MCF 10A (cell line): ENCODE measurements at regions of chr16 and their contacts with region 1.

Region 1: DNA sequence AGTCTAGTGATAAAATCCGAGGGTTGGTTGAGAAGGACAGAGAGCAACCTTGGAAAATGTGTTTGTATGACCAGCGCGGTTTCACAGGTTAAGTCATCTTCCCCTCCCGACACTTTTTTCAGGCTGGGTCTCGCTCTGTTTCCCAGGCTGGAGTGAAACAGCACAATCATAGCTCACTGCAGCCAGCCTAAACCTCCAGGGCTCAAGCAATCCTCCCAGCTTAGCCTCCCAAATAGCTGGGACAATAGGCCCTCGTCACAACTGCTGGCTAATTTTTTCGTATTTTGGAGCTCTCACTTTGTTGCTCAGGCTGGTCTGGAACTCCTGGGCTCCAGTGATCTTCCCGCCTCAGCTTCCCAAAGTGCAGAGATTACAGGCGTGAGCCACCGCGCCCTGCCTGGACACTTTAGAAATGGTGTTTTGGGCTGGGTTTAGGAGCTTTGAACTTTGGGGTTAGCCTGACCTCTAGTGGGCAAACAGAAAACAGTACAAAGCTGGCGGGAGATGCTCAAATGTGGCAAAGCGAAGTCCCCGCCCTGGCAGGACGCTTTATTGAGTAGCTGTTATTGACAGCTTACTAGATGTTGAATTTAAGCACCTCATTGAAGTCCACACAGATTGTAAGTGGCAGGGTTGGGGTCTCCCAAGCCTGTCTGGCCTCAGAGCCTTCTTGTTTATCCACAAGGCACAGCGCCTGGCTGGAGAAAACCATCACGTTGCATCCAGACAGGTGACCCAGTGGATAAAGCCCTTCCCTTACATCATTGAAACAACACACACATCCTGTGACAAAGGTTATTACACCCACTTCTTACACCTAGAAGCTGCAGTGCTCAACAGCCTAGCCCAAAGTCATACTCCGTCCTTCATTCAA is 34.7 kb upstream of the RBBP6 start:
- DNase-seq: peak; percentile 78
- H3K4me3 Mint-ChIP-seq: no peak overlapping the region
- H3K27ac Mint-ChIP-seq: no peak overlapping the region
- H3K4me1 Mint-ChIP-seq: no peaks in the 10 kb centered on the region
- H3K27me3 Mint-ChIP-seq: no peaks in the 10 kb centered on the region
- CTCF ChIP-seq: peak; percentile 88

Region 2: GRCh38 chr16:23803591-23804123 is 701.1 kb before region 1 on chr16:
- CTCF ChIA-PET with region 1: interaction called, 8 read pairs
- POLR2A ChIA-PET with region 1: no interaction called
- intact Hi-C with region 1: loop called (anchors 2 kb)
- DNase-seq: peak; percentile 61
- H3K4me3 Mint-ChIP-seq: no peak overlapping the region
- H3K27ac Mint-ChIP-seq: peak overlapping the region; percentile 5
- H3K4me1 Mint-ChIP-seq: peaks cover 7% of the 10 kb centered on the region
- H3K27me3 Mint-ChIP-seq: no peaks in the 10 kb centered on the region
- CTCF ChIP-seq: peak; percentile 46

Region 3: GRCh38 chr16:24036614-24037013 is 468.1 kb before region 1 on chr16:
- CTCF ChIA-PET with region 1: interaction called, 508 read pairs
- POLR2A ChIA-PET with region 1: interaction called, 3 read pairs
- intact Hi-C with region 1: loop called (anchors 1 kb)
- DNase-seq: peak; percentile 55
- H3K4me3 Mint-ChIP-seq: no peak overlapping the region
- H3K27ac Mint-ChIP-seq: no peak overlapping the region
- H3K4me1 Mint-ChIP-seq: no peaks in the 10 kb centered on the region
- H3K27me3 Mint-ChIP-seq: peaks cover 38% of the 10 kb centered on the region
- CTCF ChIP-seq: peak; percentile 81

Region 4: GRCh38 chr16:24054741-24055491 is 449.8 kb before region 1 on chr16:
- CTCF ChIA-PET with region 1: interaction called, 11 read pairs
- POLR2A ChIA-PET with region 1: no interaction called
- intact Hi-C with region 1: no loop called
- DNase-seq: no peak
- H3K4me3 Mint-ChIP-seq: no peak overlapping the region
- H3K27ac Mint-ChIP-seq: no peak overlapping the region
- H3K4me1 Mint-ChIP-seq: no peaks in the 10 kb centered on the region
- H3K27me3 Mint-ChIP-seq: peaks cover 74% of the 10 kb centered on the region
- CTCF ChIP-seq: no peak

Region 5: GRCh38 chr16:24253192-24253591 is 251.5 kb before region 1 on chr16:
- CTCF ChIA-PET with region 1: interaction called, 25 read pairs
- POLR2A ChIA-PET with region 1: no interaction called
- intact Hi-C with region 1: loop called (anchors 1 kb)
- DNase-seq: peak; percentile 60
- H3K4me3 Mint-ChIP-seq: no peak overlapping the region
- H3K27ac Mint-ChIP-seq: no peak overlapping the region
- H3K4me1 Mint-ChIP-seq: peaks cover 6% of the 10 kb centered on the region
- H3K27me3 Mint-ChIP-seq: peaks cover 52% of the 10 kb centered on the region
- CTCF ChIP-seq: peak; percentile 61

Region 6: DNA sequence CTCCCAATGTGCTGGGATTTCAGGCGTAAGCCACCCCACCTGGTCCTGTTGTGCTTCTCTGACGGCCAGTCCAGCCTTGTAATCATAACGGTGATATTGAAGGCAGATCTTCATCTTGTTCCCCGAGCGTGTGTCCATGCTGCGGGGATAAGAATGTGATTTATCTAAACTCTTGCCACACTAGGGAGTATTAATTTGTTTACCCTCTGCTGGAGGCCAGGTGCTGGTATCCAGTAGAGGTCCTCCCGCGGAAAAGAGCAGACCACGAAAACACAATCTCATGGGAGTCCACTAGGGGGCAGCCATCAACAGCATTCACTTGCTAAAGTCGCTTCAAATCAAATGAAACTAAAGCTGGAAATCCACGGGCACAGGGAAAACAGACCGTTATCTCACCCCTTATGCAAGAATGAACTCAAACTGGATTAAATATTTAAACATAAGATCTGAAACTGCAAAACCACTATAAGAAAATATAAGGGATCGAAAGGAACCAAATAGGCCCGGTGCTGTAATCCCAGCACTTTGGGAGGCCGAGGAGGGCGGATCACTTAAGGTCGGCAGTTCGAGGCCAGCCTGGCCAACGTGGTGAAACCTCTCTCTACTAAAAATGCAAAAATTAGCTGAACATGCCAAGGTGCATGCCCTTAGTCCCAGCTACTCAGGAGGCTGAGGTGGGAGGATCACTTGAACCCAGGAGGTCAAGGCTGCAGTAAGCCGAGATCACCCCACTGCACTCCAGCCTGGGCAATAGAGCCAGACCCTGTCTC is 12.4 kb after region 1 on chr16:
- CTCF ChIA-PET with region 1: interaction called, 58 read pairs
- POLR2A ChIA-PET with region 1: interaction called, 3 read pairs
- intact Hi-C with region 1: no loop called
- DNase-seq: peak; percentile 86
- H3K4me3 Mint-ChIP-seq: peak overlapping the region; percentile 39
- H3K27ac Mint-ChIP-seq: no peak overlapping the region
- H3K4me1 Mint-ChIP-seq: peaks cover 6% of the 10 kb centered on the region
- H3K27me3 Mint-ChIP-seq: no peaks in the 10 kb centered on the region
- CTCF ChIP-seq: peak; percentile 87